Uterus (tissue), 4 donors: ENCODE measurements at regions of chr1 and their contacts with region 1.

Region 1: DNA sequence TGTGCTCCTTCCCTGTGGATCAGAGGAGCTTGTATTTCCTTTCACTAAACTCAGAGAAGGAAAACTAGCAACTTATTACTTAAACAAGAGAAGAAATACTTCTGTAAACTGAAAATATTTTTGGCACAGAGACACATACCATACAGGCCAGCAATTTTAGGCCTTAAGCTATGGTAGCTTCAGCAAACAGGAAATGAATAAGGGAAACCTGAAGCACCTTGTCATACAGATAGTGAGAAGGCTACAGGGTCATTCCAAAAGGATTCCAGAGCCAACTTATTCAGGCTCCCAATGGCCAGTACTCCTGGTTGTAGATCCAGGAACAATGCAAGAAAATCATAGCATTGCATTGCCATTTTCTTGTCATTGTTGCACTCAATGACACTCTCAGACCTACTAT is 9.1 kb upstream of the KYAT3 start:
- DNase-seq: no peak
- H3K4me3 ChIP-seq: no peak overlapping the region
- H3K27ac ChIP-seq: no peak overlapping the region
- H3K4me1 ChIP-seq: no peaks in the 10 kb centered on the region
- H3K27me3 ChIP-seq: no peaks in the 10 kb centered on the region
- CTCF ChIP-seq: no peak
- POLR2A ChIP-seq: no peak

Region 2: DNA sequence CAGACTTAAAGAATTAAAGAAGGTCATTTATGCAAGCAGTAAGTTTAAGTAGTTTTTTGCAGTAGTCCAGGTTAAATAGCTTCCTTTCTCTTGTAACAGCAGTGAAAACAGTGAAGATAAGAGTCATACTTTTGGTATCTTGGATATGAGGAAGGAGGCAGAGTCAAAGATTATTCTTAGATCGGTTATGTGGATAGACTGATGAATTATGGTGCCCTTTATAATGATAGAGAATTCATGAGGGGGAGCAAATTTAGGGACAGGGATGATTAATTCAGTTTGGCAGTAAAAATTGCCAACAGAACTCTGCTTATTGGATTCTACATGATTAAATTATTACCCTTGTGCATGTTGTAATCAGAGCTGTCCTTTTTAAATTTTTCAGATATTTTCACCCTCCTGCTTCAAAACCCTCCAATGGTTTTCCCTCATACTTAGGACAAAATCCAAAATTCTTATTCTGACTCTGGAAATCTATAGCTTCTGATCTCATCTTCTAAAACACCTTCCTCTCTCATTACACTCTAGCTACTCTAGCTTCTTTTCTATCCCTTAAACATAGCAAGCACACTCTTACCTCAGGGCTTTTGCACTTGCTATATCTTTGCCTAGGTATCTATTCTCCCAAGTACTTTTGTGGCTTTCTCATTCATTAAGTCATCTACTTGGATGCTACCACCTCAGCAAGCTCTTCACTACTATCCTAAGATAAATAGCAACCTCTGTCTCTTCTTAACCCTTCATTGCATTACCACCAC is 237.7 kb before region 1 on chr1:
- intact Hi-C with region 1: no loop called
- DNase-seq: no peak
- H3K4me3 ChIP-seq: no peak overlapping the region
- H3K27ac ChIP-seq: peak overlapping the region in 1 of 2 donors; percentile 8
- H3K4me1 ChIP-seq: peaks cover 0 to 8% of the 10 kb centered on the region in 2 donors
- H3K27me3 ChIP-seq: no peaks in the 10 kb centered on the region
- CTCF ChIP-seq: no peak
- POLR2A ChIP-seq: no peak

Region 3: GRCh38 chr1:89100412-89100811 is 98.9 kb after region 1 on chr1:
- intact Hi-C with region 1: no loop called
- DNase-seq: no peak
- H3K4me3 ChIP-seq: no peak overlapping the region
- H3K27ac ChIP-seq: no peak overlapping the region
- H3K4me1 ChIP-seq: no peaks in the 10 kb centered on the region
- H3K27me3 ChIP-seq: no peaks in the 10 kb centered on the region
- CTCF ChIP-seq: no peak
- POLR2A ChIP-seq: no peak

Region 4: DNA sequence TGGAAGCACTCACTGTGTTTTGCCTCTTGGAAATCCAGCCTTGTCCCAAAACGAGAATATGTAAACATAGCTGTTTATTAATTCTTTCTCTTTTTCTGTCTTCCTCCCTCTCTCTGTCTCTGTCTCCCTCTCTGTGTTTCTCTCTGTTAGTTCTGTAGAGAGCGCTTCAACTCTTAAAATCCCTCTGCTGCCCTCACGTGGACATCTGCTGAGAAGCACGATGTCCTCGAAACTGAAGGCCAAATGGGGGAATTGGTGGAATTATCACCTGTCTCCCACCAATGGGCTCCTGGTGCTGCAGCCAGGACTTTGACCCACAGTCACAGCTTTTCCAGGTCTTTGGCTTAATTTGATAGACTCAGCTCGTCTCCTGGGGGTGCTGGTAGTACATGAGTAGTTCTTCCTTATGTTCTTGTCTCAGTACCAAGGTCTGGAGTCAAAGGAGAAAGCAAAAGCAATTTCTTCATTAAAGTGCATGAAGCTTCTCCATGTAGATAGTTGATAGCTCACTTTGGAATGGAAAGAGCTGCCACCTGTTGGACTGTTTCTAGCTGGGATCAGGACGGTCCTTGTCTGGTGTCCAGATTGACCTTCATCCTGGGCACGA is 356.9 kb after region 1 on chr1:
- intact Hi-C with region 1: loop called (anchors 10 kb)
- DNase-seq: peak; percentile 77 to 78
- H3K4me3 ChIP-seq: no peak overlapping the region
- H3K27ac ChIP-seq: no peak overlapping the region
- H3K4me1 ChIP-seq: no peaks in the 10 kb centered on the region
- H3K27me3 ChIP-seq: no peaks in the 10 kb centered on the region
- CTCF ChIP-seq: peak; percentile 62 to 85 (median 75)
- POLR2A ChIP-seq: no peak